Activated CD8-positive, alpha-beta T cell treated with anti-CD3 and anti-CD28 coated beads, Interleukin-2, amount 10 ng/mL, durations not matched to agents 7 days and 5 days (primary cell): ENCODE measurements at regions of chr1 and their contacts with region 1.

Region 1: DNA sequence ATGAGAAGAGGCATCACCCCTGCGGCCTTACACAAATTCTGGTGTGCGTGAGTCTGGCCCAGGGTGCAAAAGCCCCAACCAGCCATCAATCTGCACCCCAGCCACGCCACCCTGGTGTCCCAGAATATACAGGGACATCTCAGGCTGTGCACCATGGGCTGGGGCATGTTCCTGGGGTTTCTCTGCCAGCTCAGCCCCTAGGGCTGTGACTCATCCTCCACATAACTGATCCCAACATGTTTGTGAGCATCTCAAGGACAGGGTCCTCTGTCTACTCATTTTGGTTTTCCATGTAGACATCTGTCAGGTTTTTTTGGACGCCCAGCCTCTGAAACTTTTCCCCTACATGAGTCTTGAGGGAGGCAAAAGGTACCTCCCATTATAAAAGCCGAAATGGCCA is 511 bp downstream of the ZNF683 start:
- DNase-seq: no peak
- ATAC-seq: no peak
- H3K4me3 Mint-ChIP-seq: no peak overlapping the region
- H3K27ac Mint-ChIP-seq: peak overlapping the region; percentile 90
- H3K4me1 Mint-ChIP-seq: peaks cover 87% of the 10 kb centered on the region
- H3K27me3 Mint-ChIP-seq: peaks cover 2% of the 10 kb centered on the region

Region 2: GRCh38 chr1:26358411-26359384 is 13.3 kb before region 1 on chr1:
- CTCF ChIA-PET with region 1: interaction called, 160 read pairs
- POLR2A ChIA-PET with region 1: interaction called, 7 read pairs
- DNase-seq: peak; percentile 89
- ATAC-seq: peak; percentile 85
- H3K4me3 Mint-ChIP-seq: peak overlapping the region; percentile 47
- H3K27ac Mint-ChIP-seq: peak overlapping the region; percentile 68
- H3K4me1 Mint-ChIP-seq: peaks cover 70% of the 10 kb centered on the region
- H3K27me3 Mint-ChIP-seq: peaks cover 8% of the 10 kb centered on the region

Region 3: GRCh38 chr1:26553942-26554682 is 182.1 kb after region 1 on chr1:
- CTCF ChIA-PET with region 1: no interaction called
- POLR2A ChIA-PET with region 1: no interaction called
- DNase-seq: peak; percentile 42
- ATAC-seq: peak; percentile 52
- H3K4me3 Mint-ChIP-seq: no peak overlapping the region
- H3K27ac Mint-ChIP-seq: peak overlapping the region; percentile 6
- H3K4me1 Mint-ChIP-seq: peaks cover 30% of the 10 kb centered on the region
- H3K27me3 Mint-ChIP-seq: no peaks in the 10 kb centered on the region